ENCODE measurements at regions of chr1 and their contacts with region 1.

Region 1: DNA sequence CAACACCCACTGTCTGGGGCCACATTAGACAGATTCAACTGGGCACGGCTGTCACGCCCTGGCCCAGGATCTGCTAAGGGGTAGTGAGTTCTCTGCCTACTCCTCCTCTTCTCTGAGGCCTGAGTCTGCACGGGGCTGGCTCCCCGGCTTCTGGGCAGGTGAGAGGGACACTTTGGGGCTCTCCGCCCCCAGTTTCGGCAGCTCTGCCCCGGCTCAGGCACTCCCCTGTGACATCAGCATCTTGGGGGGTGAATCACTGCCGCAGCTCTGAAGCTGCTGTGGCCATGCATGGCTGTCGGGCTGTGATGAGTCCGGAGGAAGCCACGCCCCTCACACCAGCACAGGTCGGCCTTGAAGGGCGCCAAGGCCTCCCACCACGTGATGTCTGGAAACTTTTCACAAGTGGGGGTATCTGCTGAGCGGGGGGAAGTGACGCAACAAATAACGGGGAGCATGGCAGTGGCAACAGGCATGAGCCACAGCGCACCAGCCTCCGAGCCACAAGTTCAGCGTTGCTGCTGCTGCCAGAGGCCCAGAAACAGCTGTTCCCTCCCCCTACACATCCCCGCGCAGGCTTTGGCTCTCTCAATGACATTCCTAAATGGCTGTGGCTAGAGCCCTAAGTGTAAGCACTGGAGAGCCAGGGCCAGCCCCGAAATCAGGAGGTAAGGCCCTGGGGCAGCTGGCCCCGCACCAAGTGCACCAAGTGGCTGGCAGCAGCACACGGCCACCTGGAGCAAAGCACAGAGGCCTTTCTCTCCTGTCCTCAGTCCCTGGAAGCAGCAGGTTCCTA is 26.3 kb downstream of the ZBTB17 start:
- DNase-seq: peak; percentile 99
- H3K4me3 ChIP-seq: peak overlapping the region in 2 of 3 experiments; percentile 3 to 16
- H3K27ac ChIP-seq: peak overlapping the region; percentile 99
- H3K4me1 ChIP-seq: peaks cover 67% of the 10 kb centered on the region
- H3K27me3 ChIP-seq: no peaks in the 10 kb centered on the region
- CTCF ChIP-seq: no peak

Region 2: GRCh38 chr1:15788624-15789301 is 160.9 kb before region 1 on chr1:
- CTCF ChIA-PET with region 1: no interaction called
- dilution Hi-C with region 1: no loop called
- in situ Hi-C with region 1: no loop called
- intact Hi-C with region 1: loop called (anchors 1 kb)
- DNase-seq: peak; percentile 76
- H3K4me3 ChIP-seq: no peak overlapping the region
- H3K27ac ChIP-seq: peak overlapping the region; percentile 50
- H3K4me1 ChIP-seq: peaks cover 26% of the 10 kb centered on the region
- H3K27me3 ChIP-seq: no peaks in the 10 kb centered on the region
- CTCF ChIP-seq: no peak

Region 3: DNA sequence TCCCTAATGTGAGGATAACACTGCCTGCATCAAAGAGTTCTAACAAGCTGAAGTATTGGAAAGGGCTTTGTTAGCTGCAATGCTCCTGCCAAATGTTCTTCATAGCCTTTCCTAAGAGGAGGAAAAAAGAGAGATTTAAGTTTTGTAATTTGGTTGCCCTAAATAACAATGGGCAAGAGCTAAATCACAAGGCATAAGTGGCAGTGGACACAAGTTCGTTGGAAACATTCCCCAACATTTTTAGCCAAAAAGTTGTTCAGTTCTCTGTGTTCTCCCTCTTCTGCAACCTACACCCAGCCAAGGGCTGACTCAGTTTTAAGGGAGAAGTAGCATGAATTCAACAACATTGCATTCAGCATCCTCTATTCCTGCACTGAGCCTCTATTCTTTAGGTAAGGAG is 139.6 kb before region 1 on chr1:
- CTCF ChIA-PET with region 1: interaction called, 13 read pairs
- dilution Hi-C with region 1: no loop called
- in situ Hi-C with region 1: no loop called
- intact Hi-C with region 1: no loop called
- DNase-seq: no peak
- H3K4me3 ChIP-seq: no peak overlapping the region
- H3K27ac ChIP-seq: no peak overlapping the region
- H3K4me1 ChIP-seq: no peaks in the 10 kb centered on the region
- H3K27me3 ChIP-seq: no peaks in the 10 kb centered on the region
- CTCF ChIP-seq: no peak

Region 4: DNA sequence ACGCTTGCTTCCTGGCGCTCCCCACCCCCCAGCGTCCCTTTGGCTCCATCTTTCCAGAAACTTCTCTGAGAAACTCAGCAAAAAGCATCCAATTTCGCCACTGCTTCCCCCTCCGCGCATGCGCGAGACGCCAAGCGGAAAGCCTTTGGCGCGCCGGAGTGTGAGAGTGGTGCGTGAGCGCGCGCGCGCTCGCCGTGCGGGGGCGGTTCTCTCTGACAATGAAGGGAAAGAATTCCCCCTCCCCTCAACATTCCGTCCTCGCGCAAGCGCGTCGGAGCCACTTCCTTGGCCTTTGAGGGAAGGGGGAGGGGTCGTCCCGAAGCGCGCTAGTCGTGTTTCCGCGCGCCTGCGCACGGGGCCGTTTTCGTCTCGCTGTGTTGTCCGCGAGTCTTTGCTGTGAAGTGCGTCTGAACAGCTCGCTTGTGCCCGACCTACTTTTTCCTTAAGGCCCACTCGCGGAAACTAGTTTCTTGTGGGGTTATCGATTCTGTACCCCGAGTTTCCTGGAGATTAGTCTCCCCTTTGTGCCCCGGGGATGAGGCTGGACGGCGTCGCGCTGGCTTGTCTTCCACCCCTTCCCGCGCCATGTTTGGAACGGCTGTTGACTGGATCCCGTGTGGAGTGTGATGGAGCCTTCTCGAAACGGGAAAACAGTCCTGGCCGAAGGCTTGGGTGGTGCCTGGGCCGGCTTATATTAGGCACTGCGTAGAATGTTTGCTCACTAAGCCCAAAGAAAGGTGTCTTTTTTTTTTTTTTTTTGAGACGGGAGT is 113.7 kb before region 1 on chr1:
- CTCF ChIA-PET with region 1: no interaction called
- dilution Hi-C with region 1: no loop called
- in situ Hi-C with region 1: no loop called
- intact Hi-C with region 1: loop called (anchors 1 kb)
- DNase-seq: peak; percentile 99
- H3K4me3 ChIP-seq: peak overlapping the region; percentile 59 to 87 (median 65)
- H3K27ac ChIP-seq: peak overlapping the region; percentile 91
- H3K4me1 ChIP-seq: peaks cover 27% of the 10 kb centered on the region
- H3K27me3 ChIP-seq: no peaks in the 10 kb centered on the region
- CTCF ChIP-seq: no peak

Region 5: DNA sequence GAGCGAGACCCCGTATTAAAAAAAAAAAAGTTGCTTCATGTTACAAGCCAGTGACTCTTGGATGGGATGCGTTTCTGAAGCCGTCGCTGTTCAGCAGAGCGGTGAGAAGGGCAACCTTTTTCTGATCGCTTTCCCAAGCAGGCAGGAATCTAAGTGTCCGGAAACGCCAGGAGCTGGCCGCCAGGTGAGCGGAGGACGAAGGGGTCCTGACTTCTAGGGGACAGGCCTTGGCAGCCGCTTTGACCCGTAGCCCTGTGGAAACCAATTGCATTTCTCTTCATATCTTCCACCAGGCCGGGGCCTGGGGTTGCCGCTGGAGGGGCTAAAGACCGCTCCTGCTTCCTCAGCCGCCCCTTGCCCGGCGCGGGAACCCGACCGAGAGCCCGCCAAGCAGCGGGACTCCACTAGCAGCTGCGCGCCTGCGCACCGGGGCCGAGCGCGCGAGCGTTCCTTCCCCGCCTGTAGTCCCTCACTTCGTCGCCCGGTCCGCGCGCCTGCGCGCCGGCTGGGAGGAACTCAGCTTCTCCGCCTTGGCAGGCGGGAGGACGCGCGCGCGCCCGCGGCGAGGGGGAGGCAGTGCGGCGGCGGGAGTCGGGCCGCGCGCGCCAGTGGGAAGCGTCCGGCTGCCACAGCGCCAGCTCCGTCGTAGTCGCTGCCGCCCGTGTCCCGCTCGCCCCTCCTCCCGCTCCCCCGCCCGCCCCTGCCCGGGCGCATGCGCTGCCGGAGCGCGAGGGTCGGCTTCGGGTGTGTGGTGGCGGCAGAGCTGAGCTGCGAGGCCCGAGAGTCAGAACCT is 102.4 kb before region 1 on chr1 and contains the start of gene SPEN:
- CTCF ChIA-PET with region 1: interaction called, 4 read pairs
- dilution Hi-C with region 1: no loop called
- in situ Hi-C with region 1: no loop called
- intact Hi-C with region 1: loop called (anchors 1 kb)
- DNase-seq: peak; percentile 97
- H3K4me3 ChIP-seq: peak within 1 kb of the TSS; percentile 87 to 99 (median 98)
- H3K27ac ChIP-seq: peak within 1 kb of the TSS; percentile 98
- H3K4me1 ChIP-seq: peaks cover 24% of the 10 kb centered on the region
- H3K27me3 ChIP-seq: no peaks in the 10 kb centered on the region
- CTCF ChIP-seq: peak in 1 of 2 donors; percentile 2
- total RNA-seq, gene SPEN: 32.3 to 48.1 TPM

Region 6: GRCh38 chr1:15994590-15995351 is 45.1 kb after region 1 on chr1:
- CTCF ChIA-PET with region 1: no interaction called
- dilution Hi-C with region 1: no loop called
- in situ Hi-C with region 1: no loop called
- intact Hi-C with region 1: loop called (anchors 5 kb)
- DNase-seq: peak; percentile 40
- H3K4me3 ChIP-seq: no peak overlapping the region
- H3K27ac ChIP-seq: no peak overlapping the region
- H3K4me1 ChIP-seq: no peaks in the 10 kb centered on the region
- H3K27me3 ChIP-seq: no peaks in the 10 kb centered on the region
- CTCF ChIP-seq: peak; percentile 68 to 84

Measured in mammary epithelial cell (primary cell).